Transverse colon (tissue), 4 donors: ENCODE measurements at regions of chr5 and their contacts with region 1.

Region 1: DNA sequence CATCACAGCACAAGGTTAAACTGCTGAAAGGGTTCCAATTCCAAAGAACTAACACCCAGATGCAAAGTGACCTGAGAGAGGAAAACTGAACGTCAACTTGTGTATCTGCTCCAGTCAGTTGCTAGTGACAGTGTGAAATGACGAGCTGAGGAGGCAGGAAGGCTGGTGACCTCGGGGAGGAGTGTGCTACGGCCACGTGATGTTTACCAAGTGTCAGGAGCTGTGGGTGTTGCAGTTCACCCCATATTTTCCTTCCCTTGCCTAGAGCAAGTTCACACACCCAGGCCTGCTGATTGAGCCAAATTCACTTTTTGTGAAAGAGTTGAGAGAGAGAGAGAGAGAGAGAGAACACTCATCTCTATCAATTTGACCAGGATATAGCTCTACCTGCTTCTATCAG is 231.6 kb upstream of the ANKH start:
- DNase-seq: no peak
- H3K4me3 ChIP-seq: no peak overlapping the region
- H3K27ac ChIP-seq: no peak overlapping the region
- H3K4me1 ChIP-seq: no peaks in the 10 kb centered on the region
- H3K27me3 ChIP-seq: no peaks in the 10 kb centered on the region
- CTCF ChIP-seq: no peak
- EP300 ChIP-seq: no peak
- POLR2A ChIP-seq: no peak

Region 2: DNA sequence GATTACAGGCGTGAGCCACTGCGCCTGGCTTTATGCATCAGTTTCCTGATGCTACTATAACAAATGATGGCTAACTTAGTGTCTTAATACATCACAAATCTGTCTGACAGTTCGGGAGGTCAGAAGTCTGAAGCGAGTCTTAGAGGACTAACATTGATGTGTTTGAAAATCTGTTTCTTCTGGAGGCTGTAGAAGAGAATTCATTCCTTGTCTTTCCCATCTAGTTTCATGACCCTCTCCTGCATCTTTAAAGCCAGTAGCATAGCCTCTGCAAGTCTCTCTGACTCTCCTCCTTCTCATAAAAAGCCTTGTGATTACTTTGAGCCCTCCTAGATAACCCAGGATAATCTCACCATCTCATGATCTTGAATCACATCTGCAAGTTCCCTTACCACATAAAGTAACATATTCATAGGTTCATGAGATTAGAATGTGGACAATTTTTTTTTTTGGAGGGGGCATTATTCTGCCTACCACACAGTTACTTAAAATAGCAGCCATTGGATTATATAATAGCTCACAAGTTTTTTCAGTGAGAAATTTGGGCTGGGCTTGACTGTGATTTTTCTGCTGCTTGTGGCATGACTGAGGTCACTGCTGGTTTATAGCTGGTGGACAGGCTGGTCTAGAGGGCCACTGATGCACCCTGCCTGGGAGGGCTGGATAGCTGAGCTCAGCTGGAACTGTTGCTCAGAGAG is 531.6 kb after region 1 on chr5:
- in situ Hi-C with region 1: no loop called
- intact Hi-C with region 1: loop called (anchors 5 kb)
- DNase-seq: no peak
- H3K4me3 ChIP-seq: no peak overlapping the region
- H3K27ac ChIP-seq: no peak overlapping the region
- H3K4me1 ChIP-seq: peaks cover 0 to 5% (median 0%) of the 10 kb centered on the region in 4 donors
- H3K27me3 ChIP-seq: no peaks in the 10 kb centered on the region
- CTCF ChIP-seq: no peak
- EP300 ChIP-seq: no peak
- POLR2A ChIP-seq: no peak